Naive thymus-derived CD4-positive, alpha-beta T cell (primary cell): ENCODE measurements at regions of chr1 and their contacts with region 1.

Region 1: GRCh38 chr1:85200870-85201339 is at the start of gene SYDE2:
- DNase-seq: peak; percentile 72 to 91 (median 89)
- ATAC-seq: peak; percentile 90
- H3K4me3 ChIP-seq: peak within 1 kb of the TSS; percentile 84
- H3K4me3 Mint-ChIP-seq: peak within 1 kb of the TSS; percentile 86 to 100 (median 98)
- H3K27ac ChIP-seq: peak within 1 kb of the TSS; percentile 96
- H3K27ac Mint-ChIP-seq: peak within 1 kb of the TSS; percentile 88 to 100 (median 99)
- H3K4me1 ChIP-seq: peaks cover 7 to 11% of the 10 kb centered on the region in 2 donors
- H3K4me1 Mint-ChIP-seq: peaks cover 15 to 61% (median 53%) of the 10 kb centered on the region in 7 donors
- H3K27me3 ChIP-seq: no peaks in the 10 kb centered on the region
- H3K27me3 Mint-ChIP-seq: peaks cover 0 to 46% (median 0%) of the 10 kb centered on the region in 5 donors
- total RNA-seq, gene SYDE2: 1.2 to 9.1 (median 8.4) TPM

Region 2: DNA sequence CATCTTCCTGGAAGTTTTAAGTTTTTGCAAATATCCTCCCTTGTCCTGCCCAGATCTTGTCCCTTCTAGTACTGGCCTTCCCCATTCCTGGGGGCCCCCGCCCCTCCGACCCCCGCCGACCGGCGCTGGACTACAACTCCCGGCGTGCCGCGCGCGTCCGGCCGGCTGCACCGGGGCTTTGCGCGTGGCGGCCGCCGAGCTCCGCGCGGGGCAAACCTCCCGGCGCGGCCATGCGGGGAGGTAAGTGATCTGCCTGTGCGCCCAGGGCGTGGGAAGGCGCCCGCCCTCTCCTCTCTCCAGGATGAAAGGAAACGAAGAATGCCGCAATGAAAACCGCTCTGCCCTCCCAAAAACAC is 902.6 kb before region 1 on chr1:
- CTCF ChIA-PET with region 1: no interaction called
- POLR2A ChIA-PET with region 1: no interaction called
- intact Hi-C with region 1: loop called in 1 of 2 experiments (anchors 5 kb)
- DNase-seq: peak; percentile 40 to 65 (median 46)
- ATAC-seq: peak; percentile 88
- H3K4me3 ChIP-seq: peak overlapping the region; percentile 92
- H3K4me3 Mint-ChIP-seq: peak overlapping the region; percentile 83 to 95 (median 90)
- H3K27ac ChIP-seq: peak overlapping the region; percentile 69
- H3K27ac Mint-ChIP-seq: peak overlapping the region; percentile 67 to 85 (median 79)
- H3K4me1 ChIP-seq: peaks cover 4 to 25% of the 10 kb centered on the region in 2 donors
- H3K4me1 Mint-ChIP-seq: peaks cover 17 to 52% (median 42%) of the 10 kb centered on the region in 7 donors
- H3K27me3 ChIP-seq: no peaks in the 10 kb centered on the region
- H3K27me3 Mint-ChIP-seq: peaks cover 0 to 16% (median 6%) of the 10 kb centered on the region in 5 donors

Region 3: GRCh38 chr1:84690397-84691121 is 510.3 kb before region 1 on chr1 and contains the start of gene SSX2IP:
- CTCF ChIA-PET with region 1: no interaction called
- POLR2A ChIA-PET with region 1: no interaction called
- intact Hi-C with region 1: loop called in 1 of 2 experiments (anchors 1 kb)
- DNase-seq: peak; percentile 97 to 100 (median 99)
- ATAC-seq: peak; percentile 94
- H3K4me3 ChIP-seq: peak within 1 kb of the TSS; percentile 85
- H3K4me3 Mint-ChIP-seq: peak within 1 kb of the TSS; percentile 85 to 99 (median 92)
- H3K27ac ChIP-seq: peak within 1 kb of the TSS; percentile 82
- H3K27ac Mint-ChIP-seq: peak within 1 kb of the TSS; percentile 92 to 98 (median 96)
- H3K4me1 ChIP-seq: peaks cover 3 to 24% of the 10 kb centered on the region in 2 donors
- H3K4me1 Mint-ChIP-seq: peaks cover 29 to 76% (median 60%) of the 10 kb centered on the region in 7 donors
- H3K27me3 ChIP-seq: no peaks in the 10 kb centered on the region
- H3K27me3 Mint-ChIP-seq: no peaks in the 10 kb centered on the region
- total RNA-seq, gene SSX2IP: 7.5 to 13.4 (median 8.1) TPM

Region 4: DNA sequence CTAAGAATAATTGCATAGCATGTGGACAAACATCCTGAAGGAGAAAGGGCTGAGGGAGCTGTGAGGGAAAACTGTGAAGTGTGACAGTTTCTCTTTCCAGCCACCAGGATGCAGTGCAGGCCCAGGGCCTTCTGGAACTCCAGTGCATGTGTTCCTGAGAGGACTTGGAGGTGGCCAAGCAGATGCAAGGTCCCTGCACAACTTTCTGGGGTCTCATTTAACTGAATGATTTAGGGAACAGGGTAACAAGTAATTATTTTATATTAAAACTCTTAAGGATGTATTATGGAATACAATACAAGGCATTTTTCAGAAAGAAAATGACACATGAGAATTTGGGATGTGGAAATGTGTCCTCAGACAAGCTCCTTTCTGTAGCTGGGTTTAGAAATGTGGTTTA is 91.4 kb before region 1 on chr1:
- CTCF ChIA-PET with region 1: interaction called, 5 read pairs
- POLR2A ChIA-PET with region 1: interaction called, 4 read pairs
- intact Hi-C with region 1: loop called in 1 of 2 experiments (anchors 1 kb)
- DNase-seq: peak in 7 of 9 donors; percentile 27 to 57 (median 43)
- ATAC-seq: peak; percentile 69
- H3K4me3 ChIP-seq: no peak overlapping the region
- H3K4me3 Mint-ChIP-seq: no peak overlapping the region
- H3K27ac ChIP-seq: no peak overlapping the region
- H3K27ac Mint-ChIP-seq: peak overlapping the region in 1 of 9 donors; percentile 41
- H3K4me1 ChIP-seq: no peaks in the 10 kb centered on the region
- H3K4me1 Mint-ChIP-seq: no peaks in the 10 kb centered on the region
- H3K27me3 ChIP-seq: no peaks in the 10 kb centered on the region
- H3K27me3 Mint-ChIP-seq: peaks cover 0 to 31% (median 0%) of the 10 kb centered on the region in 5 donors

Region 5: DNA sequence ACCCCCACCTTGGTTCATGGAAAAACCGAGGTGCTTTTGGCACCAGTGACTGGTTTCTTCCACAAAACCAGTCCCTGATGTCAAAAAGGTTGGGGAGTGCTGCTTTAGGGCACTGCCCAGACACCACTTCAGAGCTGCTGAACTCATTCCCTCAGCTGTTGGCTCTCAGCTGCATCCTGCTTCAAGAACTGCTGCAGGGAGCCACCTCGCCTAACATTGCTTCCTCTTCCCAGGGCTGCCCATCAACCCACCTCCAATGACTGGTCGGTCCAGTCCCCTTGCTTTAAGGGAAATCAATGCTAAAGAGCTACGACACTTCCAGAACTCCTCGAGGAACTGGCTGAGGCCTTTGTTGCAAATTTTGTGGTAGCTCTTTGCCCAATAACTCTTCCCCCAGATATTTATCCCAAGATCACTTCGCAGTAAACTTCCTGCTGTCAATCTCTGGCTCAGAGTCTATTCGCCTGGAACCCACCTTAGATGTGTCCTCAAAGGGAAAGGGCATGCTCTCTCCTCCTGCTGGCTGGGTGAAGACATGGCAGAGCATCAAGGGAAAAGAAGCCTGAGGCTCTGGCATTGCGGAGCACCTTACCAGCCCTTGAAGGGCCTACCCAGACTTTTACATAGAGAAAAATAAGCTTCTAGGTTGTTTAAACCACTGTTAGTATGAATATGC is 29.5 kb after region 1 on chr1:
- CTCF ChIA-PET with region 1: interaction called, 3 read pairs
- POLR2A ChIA-PET with region 1: no interaction called
- intact Hi-C with region 1: loop called (anchors 1 to 5 kb)
- DNase-seq: peak in 2 of 9 donors; percentile 11 to 19
- ATAC-seq: peak; percentile 54
- H3K4me3 ChIP-seq: no peak overlapping the region
- H3K4me3 Mint-ChIP-seq: no peak overlapping the region
- H3K27ac ChIP-seq: no peak overlapping the region
- H3K27ac Mint-ChIP-seq: no peak overlapping the region
- H3K4me1 ChIP-seq: no peaks in the 10 kb centered on the region
- H3K4me1 Mint-ChIP-seq: peaks cover 0 to 4% (median 0%) of the 10 kb centered on the region in 7 donors
- H3K27me3 ChIP-seq: no peaks in the 10 kb centered on the region
- H3K27me3 Mint-ChIP-seq: peaks cover 0 to 22% (median 0%) of the 10 kb centered on the region in 5 donors

Region 6: GRCh38 chr1:86395771-86396497 is 1195.0 kb after region 1 on chr1 and contains the start of gene ODF2L:
- CTCF ChIA-PET with region 1: no interaction called
- POLR2A ChIA-PET with region 1: no interaction called
- intact Hi-C with region 1: loop called in 1 of 2 experiments (anchors 1 kb)
- DNase-seq: peak; percentile 73 to 92 (median 90)
- ATAC-seq: peak; percentile 100
- H3K4me3 ChIP-seq: peak within 1 kb of the TSS; percentile 80
- H3K4me3 Mint-ChIP-seq: peak within 1 kb of the TSS; percentile 90 to 100 (median 98)
- H3K27ac ChIP-seq: peak within 1 kb of the TSS; percentile 90
- H3K27ac Mint-ChIP-seq: peak within 1 kb of the TSS; percentile 94 to 99 (median 98)
- H3K4me1 ChIP-seq: peaks cover 17 to 20% of the 10 kb centered on the region in 2 donors
- H3K4me1 Mint-ChIP-seq: peaks cover 23 to 70% (median 58%) of the 10 kb centered on the region in 7 donors
- H3K27me3 ChIP-seq: no peaks in the 10 kb centered on the region
- H3K27me3 Mint-ChIP-seq: peaks cover 0 to 7% (median 0%) of the 10 kb centered on the region in 5 donors
- total RNA-seq, gene ODF2L: 50.3 to 75.3 (median 52.2) TPM